Activated T-helper 1 cell treated with anti-CD3 and anti-CD28 coated beads, Interleukin-12 subunit alpha, Interleukin-12 subunit beta, Interleukin-2, Interleukin-4 antibody, amounts not matched to agents 30 ng/mL and 10 ng/mL and 1 ng/mL, durations not matched to agents 14 hours and 24 hours and 36 hours (primary cell): ENCODE measurements at regions of chr10 and their contacts with region 1.

Region 1: DNA sequence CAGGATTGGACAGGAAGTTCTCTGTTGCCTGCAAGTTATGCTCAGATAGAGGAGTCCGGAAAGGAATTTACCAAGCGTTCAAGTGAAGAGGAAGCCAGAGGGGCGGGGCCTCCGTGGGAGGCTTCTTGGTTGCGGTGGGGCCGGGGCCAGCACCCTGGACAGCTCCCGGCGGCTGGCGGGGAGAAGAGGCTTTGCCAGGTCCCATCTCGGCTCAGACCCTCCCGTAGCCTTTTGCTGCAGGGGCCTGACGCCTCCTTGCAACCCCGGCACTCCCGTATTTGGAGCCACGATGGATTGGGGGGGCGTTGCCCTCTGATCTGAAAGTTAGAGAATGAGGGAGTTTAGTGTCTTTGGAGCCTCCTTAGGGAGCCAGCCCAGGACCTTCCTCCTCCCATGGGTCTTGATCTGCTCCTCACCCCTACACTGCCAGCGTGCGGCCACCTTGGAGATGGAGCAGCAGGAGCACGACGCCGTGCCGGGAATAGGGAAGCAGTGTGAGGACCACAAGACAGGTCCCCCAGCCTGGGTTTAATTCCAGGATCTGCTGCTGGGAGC is 3.1 kb upstream of the SLC18A3 start:
- DNase-seq: peak; percentile 72
- H3K4me3 Mint-ChIP-seq: no peak overlapping the region
- H3K27ac Mint-ChIP-seq: no peak overlapping the region
- H3K4me1 Mint-ChIP-seq: peaks cover 8% of the 10 kb centered on the region
- H3K27me3 Mint-ChIP-seq: peaks cover 46% of the 10 kb centered on the region

Region 2: DNA sequence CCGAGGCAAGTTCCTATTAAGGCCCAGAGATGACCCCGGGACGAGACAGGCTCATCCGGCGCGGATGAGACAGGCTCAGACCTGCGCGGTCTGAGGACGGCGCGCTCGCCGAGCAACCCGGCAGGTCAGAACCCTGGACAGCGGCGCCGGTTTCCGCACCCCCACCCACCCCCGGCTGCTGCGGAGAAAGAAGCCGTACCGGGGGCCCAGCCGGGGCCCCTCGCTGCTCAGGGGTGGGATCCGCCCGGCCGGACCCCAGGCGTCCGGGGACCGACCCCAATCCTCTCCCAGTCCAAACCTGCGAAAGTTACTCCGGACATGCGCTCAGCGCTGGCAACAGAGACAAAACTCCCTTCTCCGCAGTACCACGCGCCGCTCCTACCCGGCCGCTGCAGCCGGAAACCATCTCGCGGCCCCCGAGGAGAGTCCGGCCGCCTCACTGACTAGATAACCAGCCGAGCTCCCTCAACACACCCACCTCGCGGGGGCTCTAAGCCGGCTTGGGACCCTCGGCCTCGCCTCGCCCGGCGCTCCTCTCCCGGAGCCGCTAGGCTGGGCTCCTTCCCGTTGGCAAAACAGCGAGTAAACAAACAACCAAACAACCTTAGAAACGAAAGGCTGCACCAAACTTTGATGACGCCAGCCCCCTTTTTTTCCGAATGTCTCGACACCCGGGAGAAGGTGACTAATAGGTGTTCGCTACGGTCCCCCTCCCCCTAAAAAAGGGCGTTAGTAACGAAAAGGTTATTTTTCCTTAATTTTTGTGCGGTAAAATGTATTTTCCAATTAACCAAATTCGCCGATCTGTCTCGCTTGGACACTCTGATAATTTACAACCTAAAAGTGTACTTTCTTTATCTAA is 208.8 kb before region 1 on chr10:
- intact Hi-C with region 1: loop called (anchors 1 kb)
- DNase-seq: peak; percentile 23
- H3K4me3 Mint-ChIP-seq: peak overlapping the region; percentile 54
- H3K27ac Mint-ChIP-seq: no peak overlapping the region
- H3K4me1 Mint-ChIP-seq: no peaks in the 10 kb centered on the region
- H3K27me3 Mint-ChIP-seq: peaks cover 65% of the 10 kb centered on the region

Region 3: DNA sequence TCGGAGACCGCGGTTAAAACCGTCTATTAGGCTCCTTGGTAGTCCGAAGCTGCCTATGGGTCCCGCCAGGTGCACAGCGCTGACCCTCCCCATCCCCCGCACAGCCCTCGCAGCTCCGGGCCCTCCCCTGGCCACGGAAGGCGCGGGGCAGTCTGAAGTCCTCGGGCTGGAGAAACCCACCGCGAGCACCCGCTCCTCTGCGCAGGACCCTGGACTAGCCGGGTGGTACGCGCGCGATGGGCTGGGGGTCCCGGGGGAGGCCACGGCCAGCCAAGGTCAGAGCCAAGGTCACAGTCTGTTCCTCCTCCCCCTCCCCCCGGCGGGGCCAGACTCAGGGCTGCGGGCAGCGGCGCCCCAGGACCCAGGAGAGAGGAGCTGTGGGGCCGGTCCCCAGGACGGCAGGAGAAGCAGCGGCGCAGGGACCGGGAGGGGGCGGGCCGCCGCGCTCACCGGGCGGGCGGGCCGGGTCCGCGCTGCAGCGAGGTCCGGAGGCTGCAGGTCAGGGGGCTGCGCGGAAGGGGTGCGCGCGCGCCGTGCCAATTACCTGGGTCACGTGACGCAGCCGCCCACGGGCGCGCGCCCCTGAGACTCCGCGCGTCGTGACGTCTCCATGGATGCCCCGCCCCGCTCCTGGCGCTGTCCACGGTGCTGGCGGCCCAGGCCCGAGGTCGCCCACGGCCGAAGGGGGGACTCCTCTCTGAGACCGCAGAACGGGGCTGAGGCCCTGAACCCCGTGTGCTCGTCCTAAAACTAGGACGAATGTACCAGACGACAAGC is 154.9 kb after region 1 on chr10 and contains the start of gene OGDHL:
- intact Hi-C with region 1: loop called (anchors 1 kb)
- DNase-seq: peak; percentile 42
- H3K4me3 Mint-ChIP-seq: peak within 1 kb of the TSS; percentile 32
- H3K27ac Mint-ChIP-seq: no peak within 1 kb of the TSS
- H3K4me1 Mint-ChIP-seq: no peaks in the 10 kb centered on the region
- H3K27me3 Mint-ChIP-seq: peaks cover 4% of the 10 kb centered on the region
- total RNA-seq, gene OGDHL: 1.2 and 2.8 TPM in 2 replicates

Region 4: GRCh38 chr10:50385624-50386023 is 778.6 kb after region 1 on chr10:
- intact Hi-C with region 1: no loop called
- DNase-seq: no peak
- H3K4me3 Mint-ChIP-seq: no peak overlapping the region
- H3K27ac Mint-ChIP-seq: no peak overlapping the region
- H3K4me1 Mint-ChIP-seq: peaks cover 27% of the 10 kb centered on the region
- H3K27me3 Mint-ChIP-seq: no peaks in the 10 kb centered on the region